Left lung (tissue), 14 donors: ENCODE measurements at regions of chr3 and their contacts with region 1.

Region 1: GRCh38 chr3:62665598-62666437 is 209.4 kb downstream of the CADPS start:
- DNase-seq: peak; percentile 38 to 59 (median 47)
- ATAC-seq: peak; percentile 98
- H3K4me3 ChIP-seq: no peak overlapping the region
- H3K27ac ChIP-seq: no peak overlapping the region
- H3K4me1 ChIP-seq: no peaks in the 10 kb centered on the region
- H3K27me3 ChIP-seq: peaks cover 0 to 13% of the 10 kb centered on the region in 2 donors
- CTCF ChIP-seq: peak; percentile 37 to 46

Region 2: GRCh38 chr3:62392626-62393292 is 273.1 kb before region 1 on chr3:
- intact Hi-C with region 1: no loop called
- DNase-seq: peak in 1 of 4 donors; percentile 32
- ATAC-seq: no peak
- H3K4me3 ChIP-seq: no peak overlapping the region
- H3K27ac ChIP-seq: no peak overlapping the region
- H3K4me1 ChIP-seq: no peaks in the 10 kb centered on the region
- H3K27me3 ChIP-seq: no peaks in the 10 kb centered on the region
- CTCF ChIP-seq: no peak

Region 3: DNA sequence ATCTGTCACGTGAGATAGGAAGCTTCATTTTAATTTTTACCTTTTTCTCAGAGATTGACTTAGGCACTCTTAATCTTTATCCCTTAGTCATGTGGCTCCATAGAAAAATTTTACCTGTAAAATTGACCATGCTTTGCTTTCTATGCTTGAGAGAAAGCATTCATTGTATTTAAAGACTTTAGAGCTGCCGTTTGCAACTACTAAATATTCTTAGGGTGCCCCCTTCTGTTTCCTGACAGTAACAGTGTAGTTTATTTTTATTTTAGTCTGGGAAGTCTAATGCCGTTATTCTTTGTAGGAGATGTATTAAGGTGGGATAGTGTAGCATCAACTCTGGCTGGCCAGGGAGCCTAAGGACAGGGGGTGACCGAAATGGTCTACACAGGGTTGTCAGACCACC is 527.8 kb after region 1 on chr3:
- intact Hi-C with region 1: loop called in 1 of 2 experiments (anchors 10 kb)
- DNase-seq: peak in 2 of 4 donors; percentile 9 to 26
- ATAC-seq: peak; percentile 59
- H3K4me3 ChIP-seq: no peak overlapping the region
- H3K27ac ChIP-seq: no peak overlapping the region
- H3K4me1 ChIP-seq: no peaks in the 10 kb centered on the region
- H3K27me3 ChIP-seq: no peaks in the 10 kb centered on the region
- CTCF ChIP-seq: peak in 1 of 2 donors; percentile 39